CD8-positive, alpha-beta T cell (primary cell): ENCODE measurements at regions of chrX and their contacts with region 1.

Region 1: DNA sequence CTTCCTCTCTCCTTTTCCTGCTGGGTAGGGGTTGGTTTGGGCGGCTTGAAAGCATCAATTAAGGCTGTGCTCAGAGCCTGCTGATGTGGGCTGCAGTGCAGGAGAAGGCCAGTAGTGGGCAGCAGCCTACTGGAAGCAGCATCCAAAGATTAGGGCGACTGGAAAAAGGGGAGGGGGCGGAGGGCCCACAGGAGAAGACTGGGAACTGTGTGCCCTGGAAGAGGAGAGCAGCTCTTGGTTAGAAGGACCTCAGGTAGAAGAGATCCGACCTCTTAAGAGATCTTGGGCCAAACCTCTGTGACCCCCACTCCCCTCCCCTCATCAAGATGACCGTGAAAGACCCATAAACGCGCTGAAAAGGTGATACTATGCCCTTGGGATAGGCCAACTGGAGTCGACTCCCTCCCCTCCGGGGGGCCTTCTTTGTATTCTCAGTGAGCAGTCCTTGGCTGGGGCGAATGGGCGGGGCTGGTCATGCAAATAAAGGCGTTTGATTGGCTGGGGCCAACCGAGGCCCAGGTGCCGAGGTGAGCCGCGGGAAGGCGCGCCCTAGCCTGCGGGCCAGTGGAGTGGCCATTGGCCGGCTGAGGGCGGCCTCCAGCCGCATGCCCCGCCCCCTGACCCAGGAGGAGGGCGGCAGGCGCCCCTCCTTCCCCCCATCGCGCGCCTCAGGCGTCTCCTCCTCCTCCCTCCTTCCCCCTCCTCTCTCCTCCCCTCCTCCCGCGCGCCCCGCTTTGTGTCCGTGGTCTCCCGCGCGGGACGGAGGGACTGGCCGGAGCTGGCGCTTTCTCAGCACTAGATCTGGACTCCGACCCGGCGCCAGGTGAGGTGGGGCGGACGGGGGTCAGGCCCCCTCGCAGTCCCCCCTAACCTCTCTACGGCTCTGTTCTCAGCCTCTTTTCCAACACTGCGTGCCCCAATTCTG is 10.1 kb downstream of the DLG3 start:
- DNase-seq: peak; percentile 33 to 85 (median 66)
- ATAC-seq: peak; percentile 68
- H3K4me3 ChIP-seq: peak overlapping the region; percentile 62
- H3K4me3 Mint-ChIP-seq: peak overlapping the region; percentile 82
- H3K27ac ChIP-seq: peak overlapping the region; percentile 23 to 74
- H3K27ac Mint-ChIP-seq: peak overlapping the region; percentile 86
- H3K4me1 ChIP-seq: peaks cover 26% of the 10 kb centered on the region
- H3K4me1 Mint-ChIP-seq: peaks cover 39% of the 10 kb centered on the region
- H3K27me3 ChIP-seq: no peaks in the 10 kb centered on the region
- H3K27me3 Mint-ChIP-seq: no peaks in the 10 kb centered on the region
- CTCF ChIP-seq: peak; percentile 57

Region 2: DNA sequence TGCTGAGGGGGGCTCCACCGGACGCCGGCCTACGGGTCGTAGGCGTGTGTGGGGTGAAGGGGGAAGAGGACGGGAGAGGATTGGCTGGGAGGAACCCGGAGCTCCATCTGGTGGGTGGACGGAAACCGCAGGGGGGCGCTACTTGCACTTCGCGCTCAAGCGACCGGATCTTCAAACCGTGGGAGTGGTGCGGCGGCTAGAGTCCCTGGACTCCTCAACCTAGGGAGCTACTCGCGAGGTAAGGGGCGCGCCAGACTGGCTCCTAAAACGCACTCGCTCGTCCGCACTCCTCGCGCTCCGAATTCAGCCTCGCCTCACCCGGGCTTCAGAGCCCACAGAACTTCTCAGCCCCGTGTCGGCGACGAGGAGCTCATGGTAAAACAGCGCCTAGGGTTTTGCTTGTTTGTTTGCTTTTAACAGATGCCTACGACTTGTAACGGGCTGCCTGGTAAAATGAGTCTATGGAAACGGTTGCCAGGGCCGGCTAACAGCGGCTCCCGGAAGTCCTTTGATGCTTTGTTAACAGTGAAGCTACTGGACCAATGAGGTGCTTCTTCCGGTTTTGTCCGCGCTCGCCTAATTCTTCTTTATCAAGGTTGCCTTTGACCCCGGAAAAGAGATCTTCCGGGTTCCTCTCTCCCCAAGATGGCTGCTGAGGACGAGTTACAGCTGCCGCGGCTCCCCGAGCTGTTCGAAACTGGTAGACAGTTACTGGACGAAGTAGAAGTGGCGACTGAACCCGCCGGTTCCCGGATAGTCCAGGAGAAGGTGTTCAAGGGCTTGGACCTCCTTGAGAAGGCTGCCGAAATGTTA is 321.2 kb before region 1 on chrX and contains the start of gene IGBP1:
- CTCF ChIA-PET with region 1: no interaction called
- POLR2A ChIA-PET with region 1: no interaction called
- intact Hi-C with region 1: loop called in 1 of 2 experiments (anchors 5 kb)
- DNase-seq: peak; percentile 48 to 93 (median 76)
- ATAC-seq: peak; percentile 81
- H3K4me3 ChIP-seq: peak within 1 kb of the TSS; percentile 84 to 88
- H3K4me3 Mint-ChIP-seq: peak within 1 kb of the TSS; percentile 99
- H3K27ac ChIP-seq: peak within 1 kb of the TSS; percentile 95 to 96
- H3K27ac Mint-ChIP-seq: peak within 1 kb of the TSS; percentile 98
- H3K4me1 ChIP-seq: peaks cover 21% of the 10 kb centered on the region
- H3K4me1 Mint-ChIP-seq: peaks cover 45% of the 10 kb centered on the region
- H3K27me3 ChIP-seq: no peaks in the 10 kb centered on the region
- H3K27me3 Mint-ChIP-seq: no peaks in the 10 kb centered on the region
- CTCF ChIP-seq: peak; percentile 48
- total RNA-seq, gene IGBP1: 55.7 to 56.6 TPM

Region 3: GRCh38 chrX:70196961-70197805 is 257.5 kb before region 1 on chrX:
- CTCF ChIA-PET with region 1: no interaction called
- POLR2A ChIA-PET with region 1: no interaction called
- intact Hi-C with region 1: loop called in 1 of 2 experiments (anchors 5 kb)
- DNase-seq: peak; percentile 36 to 76 (median 64)
- ATAC-seq: peak; percentile 94
- H3K4me3 ChIP-seq: no peak overlapping the region
- H3K4me3 Mint-ChIP-seq: no peak overlapping the region
- H3K27ac ChIP-seq: no peak overlapping the region
- H3K27ac Mint-ChIP-seq: no peak overlapping the region
- H3K4me1 ChIP-seq: no peaks in the 10 kb centered on the region
- H3K4me1 Mint-ChIP-seq: peaks cover 2% of the 10 kb centered on the region
- H3K27me3 ChIP-seq: no peaks in the 10 kb centered on the region
- H3K27me3 Mint-ChIP-seq: peaks cover 5% of the 10 kb centered on the region
- CTCF ChIP-seq: peak; percentile 59

Region 4: GRCh38 chrX:70331161-70331560 is 123.5 kb before region 1 on chrX:
- CTCF ChIA-PET with region 1: no interaction called
- POLR2A ChIA-PET with region 1: no interaction called
- intact Hi-C with region 1: no loop called
- DNase-seq: no peak
- ATAC-seq: no peak
- H3K4me3 ChIP-seq: no peak overlapping the region
- H3K4me3 Mint-ChIP-seq: no peak overlapping the region
- H3K27ac ChIP-seq: no peak overlapping the region
- H3K27ac Mint-ChIP-seq: no peak overlapping the region
- H3K4me1 ChIP-seq: no peaks in the 10 kb centered on the region
- H3K4me1 Mint-ChIP-seq: no peaks in the 10 kb centered on the region
- H3K27me3 ChIP-seq: no peaks in the 10 kb centered on the region
- H3K27me3 Mint-ChIP-seq: no peaks in the 10 kb centered on the region
- CTCF ChIP-seq: no peak

Region 5: DNA sequence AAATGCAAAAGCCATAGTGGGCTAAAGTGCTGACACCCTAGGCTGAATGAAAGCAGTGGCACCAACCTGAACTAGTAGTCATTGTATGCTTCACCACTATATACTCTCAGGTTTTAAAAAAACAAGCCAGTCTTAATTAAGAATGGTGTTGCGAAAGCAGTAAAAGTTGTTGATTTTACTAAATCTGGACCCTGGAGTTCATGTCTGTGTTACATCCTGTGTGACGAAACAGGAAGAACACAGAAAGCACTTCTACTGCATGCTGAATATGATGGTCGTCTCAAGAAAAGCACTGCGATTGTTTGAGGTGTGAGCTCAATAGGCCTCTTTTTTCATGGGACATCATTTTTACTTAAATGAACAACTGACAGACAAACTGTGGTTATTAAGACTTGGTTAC is 55.8 kb before region 1 on chrX:
- CTCF ChIA-PET with region 1: no interaction called
- POLR2A ChIA-PET with region 1: no interaction called
- intact Hi-C with region 1: no loop called
- DNase-seq: peak in 3 of 9 experiments; percentile 35 to 82 (median 69)
- ATAC-seq: peak; percentile 93
- H3K4me3 ChIP-seq: no peak overlapping the region
- H3K4me3 Mint-ChIP-seq: peak overlapping the region; percentile 23
- H3K27ac ChIP-seq: peak overlapping the region; percentile 72 to 77
- H3K27ac Mint-ChIP-seq: peak overlapping the region; percentile 98
- H3K4me1 ChIP-seq: peaks cover 6% of the 10 kb centered on the region
- H3K4me1 Mint-ChIP-seq: peaks cover 10% of the 10 kb centered on the region
- H3K27me3 ChIP-seq: no peaks in the 10 kb centered on the region
- H3K27me3 Mint-ChIP-seq: no peaks in the 10 kb centered on the region
- CTCF ChIP-seq: no peak

Region 6: GRCh38 chrX:70554081-70554480 is 99.4 kb after region 1 on chrX:
- CTCF ChIA-PET with region 1: interaction called, 3 read pairs
- POLR2A ChIA-PET with region 1: no interaction called
- intact Hi-C with region 1: loop called in 1 of 2 experiments (anchors 2 kb)
- DNase-seq: peak in 2 of 9 experiments; percentile 0
- ATAC-seq: no peak
- H3K4me3 ChIP-seq: no peak overlapping the region
- H3K4me3 Mint-ChIP-seq: no peak overlapping the region
- H3K27ac ChIP-seq: no peak overlapping the region
- H3K27ac Mint-ChIP-seq: no peak overlapping the region
- H3K4me1 ChIP-seq: no peaks in the 10 kb centered on the region
- H3K4me1 Mint-ChIP-seq: no peaks in the 10 kb centered on the region
- H3K27me3 ChIP-seq: no peaks in the 10 kb centered on the region
- H3K27me3 Mint-ChIP-seq: no peaks in the 10 kb centered on the region
- CTCF ChIP-seq: no peak

Region 7: DNA sequence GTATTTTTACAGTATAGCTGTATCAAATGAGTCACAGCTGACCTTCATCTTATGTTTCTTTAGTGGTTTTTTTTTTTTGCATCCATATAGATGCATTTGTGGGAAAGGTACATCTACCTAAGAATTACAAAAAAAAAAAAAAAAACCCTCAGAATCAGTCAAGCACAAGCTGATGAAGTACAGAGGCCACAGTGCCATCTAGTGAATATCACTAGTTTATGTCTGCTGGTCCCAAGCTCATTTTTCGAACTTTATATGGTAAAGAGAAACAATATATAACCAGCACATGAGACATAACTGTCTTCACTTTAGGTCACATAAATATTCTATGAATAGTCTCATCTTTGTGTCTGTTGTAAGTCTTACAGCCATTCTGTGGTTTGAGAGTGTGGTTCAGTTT is 210.0 kb after region 1 on chrX:
- CTCF ChIA-PET with region 1: interaction called, 4 read pairs
- POLR2A ChIA-PET with region 1: no interaction called
- intact Hi-C with region 1: loop called (anchors 1 to 5 kb)
- DNase-seq: peak in 2 of 9 experiments; percentile 34 to 43
- ATAC-seq: no peak
- H3K4me3 ChIP-seq: no peak overlapping the region
- H3K4me3 Mint-ChIP-seq: no peak overlapping the region
- H3K27ac ChIP-seq: no peak overlapping the region
- H3K27ac Mint-ChIP-seq: no peak overlapping the region
- H3K4me1 ChIP-seq: no peaks in the 10 kb centered on the region
- H3K4me1 Mint-ChIP-seq: no peaks in the 10 kb centered on the region
- H3K27me3 ChIP-seq: no peaks in the 10 kb centered on the region
- H3K27me3 Mint-ChIP-seq: peaks cover 2% of the 10 kb centered on the region
- CTCF ChIP-seq: peak; percentile 12

Region 8: DNA sequence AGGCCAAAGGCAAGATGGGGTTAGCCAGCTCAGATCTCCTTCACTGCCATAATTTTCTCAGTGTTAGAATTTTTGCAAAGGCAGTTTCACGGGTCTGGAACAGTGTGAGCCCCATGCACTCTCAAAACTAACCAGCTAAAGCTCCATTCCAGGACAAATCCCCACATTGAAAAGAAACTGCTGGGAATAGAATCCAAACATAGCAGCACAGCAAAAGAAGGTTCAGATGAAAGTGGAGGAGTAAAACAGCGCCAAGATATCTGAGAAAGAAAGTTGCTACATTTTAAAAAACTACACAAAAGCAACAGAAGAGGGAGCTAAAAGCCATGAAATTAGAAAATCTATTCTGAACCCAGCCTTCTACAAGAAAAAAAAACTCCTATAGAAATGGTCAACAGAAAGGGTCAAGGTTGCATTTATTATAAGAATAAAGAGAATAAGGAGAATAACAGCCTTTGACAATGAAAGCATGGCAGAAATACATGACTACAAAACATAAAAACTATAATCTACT is 515.8 kb after region 1 on chrX:
- CTCF ChIA-PET with region 1: no interaction called
- POLR2A ChIA-PET with region 1: no interaction called
- intact Hi-C with region 1: loop called in 1 of 2 experiments (anchors 10 kb)
- DNase-seq: peak in 2 of 9 experiments; percentile 15 to 29
- ATAC-seq: no peak
- H3K4me3 ChIP-seq: no peak overlapping the region
- H3K4me3 Mint-ChIP-seq: peak overlapping the region; percentile 62
- H3K27ac ChIP-seq: no peak overlapping the region
- H3K27ac Mint-ChIP-seq: no peak overlapping the region
- H3K4me1 ChIP-seq: no peaks in the 10 kb centered on the region
- H3K4me1 Mint-ChIP-seq: peaks cover 6% of the 10 kb centered on the region
- H3K27me3 ChIP-seq: no peaks in the 10 kb centered on the region
- H3K27me3 Mint-ChIP-seq: no peaks in the 10 kb centered on the region
- CTCF ChIP-seq: peak; percentile 33

Region 9: GRCh38 chrX:71095543-71095911 is 640.8 kb after region 1 on chrX and contains the start of gene FOXO4:
- CTCF ChIA-PET with region 1: no interaction called
- POLR2A ChIA-PET with region 1: no interaction called
- intact Hi-C with region 1: loop called in 1 of 2 experiments (anchors 10 kb)
- DNase-seq: peak; percentile 74 to 94 (median 88)
- ATAC-seq: peak; percentile 82
- H3K4me3 ChIP-seq: peak within 1 kb of the TSS; percentile 73 to 78
- H3K4me3 Mint-ChIP-seq: peak within 1 kb of the TSS; percentile 93
- H3K27ac ChIP-seq: peak within 1 kb of the TSS; percentile 34 to 68
- H3K27ac Mint-ChIP-seq: peak within 1 kb of the TSS; percentile 93
- H3K4me1 ChIP-seq: peaks cover 30% of the 10 kb centered on the region
- H3K4me1 Mint-ChIP-seq: peaks cover 37% of the 10 kb centered on the region
- H3K27me3 ChIP-seq: no peaks in the 10 kb centered on the region
- H3K27me3 Mint-ChIP-seq: no peaks in the 10 kb centered on the region
- CTCF ChIP-seq: no peak
- total RNA-seq, gene FOXO4: 24.1 to 32.6 TPM